Activated naive CD4-positive, alpha-beta T cell treated with anti-CD3 and anti-CD28 coated beads for 36 hours (primary cell): ENCODE measurements at regions of chr6 and their contacts with region 1.

Region 1: DNA sequence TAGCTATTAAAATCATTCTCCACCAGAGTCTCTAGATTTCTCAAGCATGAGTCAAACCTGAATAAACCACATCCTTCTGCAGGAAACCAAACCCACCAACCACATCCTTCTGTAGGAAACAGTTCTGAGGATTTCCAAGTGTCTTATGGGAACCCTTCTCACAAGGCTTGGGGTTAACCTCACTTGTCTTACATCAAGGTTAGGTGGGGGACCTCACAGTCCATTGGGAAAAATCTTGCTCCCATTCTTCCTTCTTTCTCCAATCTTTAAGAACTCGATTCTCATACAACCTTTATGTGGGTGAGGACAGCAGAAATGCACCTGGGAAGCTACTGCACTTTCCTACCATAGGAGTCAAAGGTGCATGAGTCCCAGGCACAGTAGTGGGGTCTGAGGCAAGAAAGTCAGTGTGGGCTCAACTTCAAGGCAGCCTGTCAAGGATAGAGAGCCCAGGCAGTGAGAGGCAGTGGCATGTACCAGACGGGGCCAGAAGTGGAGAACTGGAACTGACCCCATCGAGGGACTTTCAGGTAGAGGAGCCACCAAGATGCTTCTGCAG is 114.5 kb downstream of the SLC22A3 start:
- DNase-seq: peak; percentile 79
- H3K4me3 Mint-ChIP-seq: no peak overlapping the region
- H3K27ac Mint-ChIP-seq: peak overlapping the region; percentile 50
- H3K4me1 Mint-ChIP-seq: peaks cover 53% of the 10 kb centered on the region
- H3K27me3 Mint-ChIP-seq: peaks cover 3% of the 10 kb centered on the region

Region 2: DNA sequence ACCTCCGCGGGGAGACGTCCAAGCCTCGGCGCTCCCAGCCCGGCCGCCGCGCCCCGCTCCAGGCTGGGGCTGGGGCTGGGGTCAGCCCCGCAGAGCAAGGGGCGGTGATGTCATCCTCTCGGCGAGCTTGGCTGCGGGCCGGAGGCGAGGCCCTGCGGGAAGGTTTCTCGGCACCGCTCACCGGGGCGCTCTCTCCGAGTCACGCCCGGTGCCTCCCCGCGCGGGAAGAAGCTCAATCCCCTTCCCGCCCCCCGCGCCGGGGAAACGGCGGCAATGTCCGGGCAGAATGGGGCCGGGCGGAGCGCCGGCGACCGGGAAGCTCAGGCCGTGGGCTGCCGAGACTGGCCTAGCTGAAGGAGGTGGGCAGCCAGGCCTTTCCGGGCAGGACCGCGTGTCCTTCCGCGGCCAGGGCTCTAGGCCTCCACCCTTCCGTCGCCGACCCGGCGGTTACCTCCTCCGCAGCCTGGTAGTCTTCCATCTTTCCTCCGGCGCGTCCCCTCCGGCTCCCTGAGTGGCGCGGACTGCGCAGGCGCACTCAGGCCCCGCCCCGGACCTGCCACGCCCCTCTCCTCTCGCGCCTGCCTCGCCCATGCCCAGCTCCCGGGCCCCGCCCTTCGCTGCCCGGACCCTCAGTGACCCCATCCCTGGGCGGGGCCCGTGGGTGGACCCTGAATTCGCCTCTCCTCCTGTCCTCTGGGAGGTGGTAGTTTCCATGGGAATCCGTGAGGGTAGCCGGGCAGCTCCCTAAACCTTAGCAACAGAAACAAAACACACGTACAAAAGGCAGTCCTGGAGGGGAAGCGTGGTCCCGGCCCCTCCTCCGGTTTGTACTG is 1818.2 kb before region 1 on chr6 and contains the start of gene DYNLT1:
- CTCF ChIA-PET with region 1: no interaction called
- intact Hi-C with region 1: loop called (anchors 5 kb)
- DNase-seq: peak; percentile 91
- H3K4me3 Mint-ChIP-seq: peak within 1 kb of the TSS; percentile 97
- H3K27ac Mint-ChIP-seq: peak within 1 kb of the TSS; percentile 99
- H3K4me1 Mint-ChIP-seq: peaks cover 76% of the 10 kb centered on the region
- H3K27me3 Mint-ChIP-seq: no peaks in the 10 kb centered on the region
- total RNA-seq, gene DYNLT1: 99.1 to 107 TPM

Region 3: GRCh38 chr6:159789377-159790148 is 673.1 kb before region 1 on chr6 and contains the start of gene TCP1:
- CTCF ChIA-PET with region 1: no interaction called
- intact Hi-C with region 1: loop called (anchors 1 kb)
- DNase-seq: peak; percentile 100
- H3K4me3 Mint-ChIP-seq: peak within 1 kb of the TSS; percentile 99
- H3K27ac Mint-ChIP-seq: peak within 1 kb of the TSS; percentile 98
- H3K4me1 Mint-ChIP-seq: peaks cover 66% of the 10 kb centered on the region
- H3K27me3 Mint-ChIP-seq: no peaks in the 10 kb centered on the region
- total RNA-seq, gene TCP1: 420 to 425 TPM

Region 4: DNA sequence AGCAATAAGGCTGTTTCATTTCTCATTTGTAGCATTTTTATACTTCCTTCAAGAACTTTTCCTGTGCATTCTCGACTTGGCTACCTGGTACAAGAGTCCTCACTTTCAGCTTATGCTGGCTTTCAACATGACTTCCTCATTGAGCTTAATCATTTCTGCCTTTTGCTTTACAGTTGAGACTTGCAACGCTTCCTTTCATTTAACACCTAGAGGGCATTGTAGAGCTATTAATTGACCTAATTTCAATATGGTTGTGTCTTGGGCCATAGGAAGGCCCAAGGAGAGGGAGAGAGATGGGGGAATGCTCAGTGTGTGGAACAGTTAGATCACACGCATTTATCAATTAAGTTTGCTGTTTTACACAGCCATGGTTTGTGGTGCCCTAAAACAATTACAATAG is 241.2 kb before region 1 on chr6:
- CTCF ChIA-PET with region 1: no interaction called
- intact Hi-C with region 1: loop called (anchors 2 kb)
- DNase-seq: no peak
- H3K4me3 Mint-ChIP-seq: no peak overlapping the region
- H3K27ac Mint-ChIP-seq: no peak overlapping the region
- H3K4me1 Mint-ChIP-seq: peaks cover 8% of the 10 kb centered on the region
- H3K27me3 Mint-ChIP-seq: peaks cover 19% of the 10 kb centered on the region

Region 5: GRCh38 chr6:160520043-160520904 is 57.6 kb after region 1 on chr6:
- CTCF ChIA-PET with region 1: interaction called, 7 read pairs
- intact Hi-C with region 1: loop called (anchors 1 kb)
- DNase-seq: peak; percentile 45
- H3K4me3 Mint-ChIP-seq: peak overlapping the region; percentile 88
- H3K27ac Mint-ChIP-seq: peak overlapping the region; percentile 80
- H3K4me1 Mint-ChIP-seq: peaks cover 17% of the 10 kb centered on the region
- H3K27me3 Mint-ChIP-seq: no peaks in the 10 kb centered on the region